ENCODE measurements at regions of chr12 and their contacts with region 1.

Region 1: GRCh38 chr12:26728205-26729050 is 104.6 kb downstream of the ITPR2 start:
- DNase-seq: no peak
- H3K4me3 Mint-ChIP-seq: no peak overlapping the region
- H3K27ac Mint-ChIP-seq: no peak overlapping the region
- H3K4me1 Mint-ChIP-seq: peaks cover 57% of the 10 kb centered on the region
- H3K27me3 Mint-ChIP-seq: peaks cover 3% of the 10 kb centered on the region

Region 2: DNA sequence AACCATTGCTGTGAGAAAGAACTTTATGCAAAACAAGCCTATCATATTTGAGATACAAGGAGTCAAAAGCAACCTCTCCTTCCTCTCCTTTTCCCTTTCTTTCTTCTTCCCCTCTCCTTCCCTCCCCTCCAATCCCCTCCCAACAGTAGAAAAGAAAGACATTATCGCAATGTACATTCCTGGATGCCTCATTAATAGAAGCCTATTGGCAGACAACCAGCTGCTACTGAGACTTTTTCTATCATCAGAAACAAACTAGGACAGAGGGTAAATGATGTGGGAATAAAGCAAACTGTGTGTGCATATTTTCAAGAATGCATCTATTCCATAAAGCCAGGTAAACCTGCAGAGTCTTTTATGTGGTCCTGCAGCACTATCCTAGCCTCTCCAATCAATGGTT is 132.6 kb before region 1 on chr12:
- intact Hi-C with region 1: no loop called
- DNase-seq: no peak
- H3K4me3 Mint-ChIP-seq: no peak overlapping the region
- H3K27ac Mint-ChIP-seq: no peak overlapping the region
- H3K4me1 Mint-ChIP-seq: no peaks in the 10 kb centered on the region
- H3K27me3 Mint-ChIP-seq: no peaks in the 10 kb centered on the region

Region 3: DNA sequence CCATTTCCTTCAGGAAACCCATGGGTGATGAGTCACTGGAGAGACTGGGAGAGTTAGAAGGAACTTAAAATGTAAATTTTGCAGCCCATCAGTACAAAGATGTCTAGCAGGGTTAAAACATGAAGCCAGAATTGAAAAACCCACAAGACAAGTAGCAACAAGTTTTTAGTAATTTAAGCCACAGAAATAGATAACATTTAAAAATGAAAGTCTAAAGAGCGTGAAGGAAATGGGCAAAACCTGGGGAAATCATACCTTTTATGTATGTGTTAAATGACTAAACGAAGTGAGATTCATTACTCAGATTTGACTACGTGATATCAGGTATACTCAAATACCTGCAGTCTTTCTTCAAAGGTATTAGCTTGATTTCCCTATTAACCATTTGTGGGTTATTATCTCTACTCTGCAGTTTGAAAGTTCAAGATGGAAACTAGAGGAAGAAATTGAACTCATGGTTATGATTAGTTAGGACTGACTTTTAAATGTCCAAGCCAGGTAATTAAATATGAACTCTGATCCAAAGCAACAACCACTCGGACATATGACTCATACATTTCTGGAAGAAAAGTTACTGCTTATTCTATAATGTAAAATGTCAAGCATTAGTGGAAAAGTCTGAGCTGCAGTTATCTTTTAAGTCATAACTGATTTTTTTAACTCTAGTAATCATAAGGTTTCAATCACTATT is 20.5 kb after region 1 on chr12:
- intact Hi-C with region 1: loop called (anchors 2 kb)
- DNase-seq: no peak
- H3K4me3 Mint-ChIP-seq: peak overlapping the region; percentile 40
- H3K27ac Mint-ChIP-seq: peak overlapping the region; percentile 70
- H3K4me1 Mint-ChIP-seq: peaks cover 53% of the 10 kb centered on the region
- H3K27me3 Mint-ChIP-seq: no peaks in the 10 kb centered on the region